PC-3 (cell line): ENCODE measurements at regions of chr3 and their contacts with region 1.

Region 1: DNA sequence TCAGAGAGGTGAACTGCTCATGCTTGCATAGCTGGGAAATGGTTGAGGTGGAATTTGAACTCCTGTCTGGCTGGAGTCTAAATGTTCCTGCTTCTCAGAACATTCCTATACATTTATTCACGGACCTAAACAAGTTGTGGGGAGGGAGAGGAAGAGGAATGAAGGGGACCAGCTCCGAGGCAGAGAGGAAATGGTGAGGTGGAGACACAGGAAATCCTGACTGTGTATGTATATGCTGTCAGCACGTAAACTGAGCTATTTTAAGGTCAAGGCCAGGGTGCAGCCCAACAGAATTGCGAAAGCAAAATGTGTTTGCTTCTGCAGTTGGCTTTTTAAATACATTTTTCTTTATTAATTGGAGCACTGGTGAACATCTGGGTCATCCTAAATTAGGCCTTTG is 74.1 kb upstream of the POMGNT2 start:
- DNase-seq: peak; percentile 97
- ATAC-seq: peak; percentile 67
- H3K4me3 ChIP-seq: no peak overlapping the region
- H3K27ac ChIP-seq: peak overlapping the region; percentile 99
- H3K4me1 ChIP-seq: peaks cover 43% of the 10 kb centered on the region
- H3K27me3 ChIP-seq: no peaks in the 10 kb centered on the region
- CTCF ChIP-seq: no peak

Region 2: DNA sequence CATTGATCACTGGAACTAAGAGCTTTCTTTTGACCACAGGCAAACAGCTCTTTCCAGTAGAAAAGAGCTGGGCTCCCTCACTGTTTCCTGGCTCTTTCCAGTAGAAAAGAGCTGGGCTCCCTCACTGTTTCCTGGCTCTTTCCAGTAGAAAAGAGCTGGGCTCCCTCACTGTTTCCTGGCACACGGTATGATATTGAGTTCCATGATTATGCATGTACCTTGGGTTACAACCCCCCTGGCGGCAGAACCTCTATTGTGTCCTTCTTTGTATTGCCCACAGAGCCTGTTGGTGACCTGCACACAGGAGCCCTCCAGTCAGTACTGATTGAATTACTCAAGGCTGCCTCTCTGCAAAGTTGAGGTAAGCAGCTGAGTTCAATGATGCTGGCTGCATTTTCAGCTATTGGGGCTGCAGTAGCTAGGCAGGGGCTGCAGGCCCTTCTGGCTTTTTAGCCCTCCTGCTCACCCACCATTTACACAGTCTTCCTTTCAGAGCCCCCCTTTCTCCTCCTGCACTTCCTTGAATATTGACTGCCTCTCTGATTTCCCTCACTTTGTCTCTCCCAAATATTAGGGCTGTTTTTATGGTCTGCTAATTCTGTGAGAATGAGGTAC is 360.6 kb before region 1 on chr3:
- CTCF ChIA-PET with region 1: no interaction called
- POLR2A ChIA-PET with region 1: no interaction called
- intact Hi-C with region 1: no loop called
- DNase-seq: peak; percentile 59
- ATAC-seq: peak; percentile 21
- H3K4me3 ChIP-seq: peak overlapping the region; percentile 32
- H3K27ac ChIP-seq: peak overlapping the region; percentile 99
- H3K4me1 ChIP-seq: peaks cover 59% of the 10 kb centered on the region
- H3K27me3 ChIP-seq: no peaks in the 10 kb centered on the region
- CTCF ChIP-seq: no peak; the same call in 1 of the 2 replicates

Region 3: DNA sequence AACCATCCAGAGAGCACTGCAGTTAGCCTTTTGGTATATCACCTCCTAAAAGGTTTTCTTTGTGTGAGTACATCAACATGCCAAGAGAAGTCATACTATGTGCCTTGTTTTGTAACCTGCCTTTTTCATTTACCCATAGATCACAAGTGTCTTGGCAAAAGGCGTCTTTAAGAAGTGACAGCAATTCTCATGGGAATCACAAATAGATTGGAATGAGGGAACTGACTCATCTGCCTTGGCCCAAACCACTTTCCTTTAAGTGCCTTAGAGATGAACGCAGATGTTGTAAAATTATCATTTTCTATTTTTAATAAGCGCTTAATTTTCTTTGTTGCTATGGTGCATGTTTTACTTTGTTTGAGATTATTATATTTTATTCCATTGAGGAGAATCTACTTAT is 53.5 kb before region 1 on chr3:
- CTCF ChIA-PET with region 1: no interaction called
- POLR2A ChIA-PET with region 1: no interaction called
- intact Hi-C with region 1: no loop called
- DNase-seq: no peak
- ATAC-seq: no peak
- H3K4me3 ChIP-seq: no peak overlapping the region
- H3K27ac ChIP-seq: no peak overlapping the region
- H3K4me1 ChIP-seq: no peaks in the 10 kb centered on the region
- H3K27me3 ChIP-seq: no peaks in the 10 kb centered on the region
- CTCF ChIP-seq: no peak

Region 4: GRCh38 chr3:43190666-43191065 is 10.6 kb after region 1 on chr3:
- CTCF ChIA-PET with region 1: no interaction called
- POLR2A ChIA-PET with region 1: interaction called, 6 read pairs
- intact Hi-C with region 1: loop called (anchors 1 kb)
- DNase-seq: peak; percentile 96
- ATAC-seq: peak; percentile 82
- H3K4me3 ChIP-seq: peak overlapping the region; percentile 23; the same call in 1 of the 2 replicates
- H3K27ac ChIP-seq: peak overlapping the region; percentile 96
- H3K4me1 ChIP-seq: peaks cover 39% of the 10 kb centered on the region
- H3K27me3 ChIP-seq: no peaks in the 10 kb centered on the region
- CTCF ChIP-seq: no peak

Region 5: GRCh38 chr3:43214616-43215015 is 34.6 kb after region 1 on chr3:
- CTCF ChIA-PET with region 1: interaction called, 3 read pairs
- POLR2A ChIA-PET with region 1: interaction called, 4 read pairs
- intact Hi-C with region 1: loop called (anchors 5 kb)
- DNase-seq: peak; percentile 91
- ATAC-seq: peak; percentile 91
- H3K4me3 ChIP-seq: no peak overlapping the region
- H3K27ac ChIP-seq: peak overlapping the region; percentile 71
- H3K4me1 ChIP-seq: peaks cover 30% of the 10 kb centered on the region
- H3K27me3 ChIP-seq: no peaks in the 10 kb centered on the region
- CTCF ChIP-seq: no peak

Region 6: GRCh38 chr3:43286115-43286840 is 106.3 kb after region 1 on chr3 and contains the start of gene SNRK:
- CTCF ChIA-PET with region 1: no interaction called
- POLR2A ChIA-PET with region 1: interaction called, 9 read pairs
- intact Hi-C with region 1: loop called (anchors 1 kb)
- DNase-seq: peak; percentile 89
- ATAC-seq: peak; percentile 69
- H3K4me3 ChIP-seq: peak within 1 kb of the TSS; percentile 85
- H3K27ac ChIP-seq: peak within 1 kb of the TSS; percentile 60
- H3K4me1 ChIP-seq: peaks cover 36% of the 10 kb centered on the region
- H3K27me3 ChIP-seq: no peaks in the 10 kb centered on the region
- CTCF ChIP-seq: no peak; the same call in 1 of the 2 replicates
- total RNA-seq, gene SNRK: 53.3 and 53.4 TPM in 2 replicates